Vagina (tissue), 2 donors: ENCODE measurements at regions of chr4 and their contacts with region 1.

Region 1: GRCh38 chr4:8874896-8875680 is 3.4 kb upstream of the HMX1 start:
- DNase-seq: no peak
- H3K4me3 ChIP-seq: no peak overlapping the region
- H3K27ac ChIP-seq: no peak overlapping the region
- H3K4me1 ChIP-seq: peaks cover 7% of the 10 kb centered on the region
- H3K27me3 ChIP-seq: no peaks in the 10 kb centered on the region
- CTCF ChIP-seq: no peak
- POLR2A ChIP-seq: no peak

Region 2: DNA sequence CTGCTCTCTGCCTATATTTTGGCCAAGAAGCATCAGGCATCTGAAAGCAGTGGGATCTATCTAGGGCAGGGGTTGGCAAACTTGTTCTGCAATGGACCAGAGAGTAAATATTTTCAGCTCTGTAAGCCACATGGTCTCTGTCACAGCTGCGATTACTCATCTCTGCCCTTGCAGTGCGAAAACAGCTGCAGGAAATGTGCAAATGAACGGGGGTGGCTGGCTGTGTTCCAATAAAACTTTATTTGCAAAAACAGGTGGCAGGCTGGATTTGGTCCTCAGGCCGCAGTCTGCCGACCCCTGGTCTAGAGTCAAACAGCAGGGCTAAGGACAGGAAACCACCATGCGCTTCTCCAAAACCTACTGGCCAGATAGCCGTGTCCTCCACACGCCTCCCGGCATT is 483.1 kb before region 1 on chr4:
- intact Hi-C with region 1: no loop called
- DNase-seq: no peak
- H3K4me3 ChIP-seq: no peak overlapping the region
- H3K27ac ChIP-seq: peak overlapping the region; percentile 84
- H3K4me1 ChIP-seq: peaks cover 31% of the 10 kb centered on the region
- H3K27me3 ChIP-seq: no peaks in the 10 kb centered on the region
- CTCF ChIP-seq: no peak
- POLR2A ChIP-seq: no peak

Region 3: GRCh38 chr4:8709729-8710360 is 165.2 kb before region 1 on chr4:
- intact Hi-C with region 1: no loop called
- DNase-seq: no peak
- H3K4me3 ChIP-seq: no peak overlapping the region
- H3K27ac ChIP-seq: no peak overlapping the region
- H3K4me1 ChIP-seq: no peaks in the 10 kb centered on the region
- H3K27me3 ChIP-seq: no peaks in the 10 kb centered on the region
- CTCF ChIP-seq: no peak
- POLR2A ChIP-seq: no peak

Region 4: GRCh38 chr4:10722957-10723356 is 1847.9 kb after region 1 on chr4:
- intact Hi-C with region 1: loop called (anchors 5 kb)
- DNase-seq: no peak
- H3K4me3 ChIP-seq: no peak overlapping the region
- H3K27ac ChIP-seq: no peak overlapping the region
- H3K4me1 ChIP-seq: no peaks in the 10 kb centered on the region
- H3K27me3 ChIP-seq: no peaks in the 10 kb centered on the region
- CTCF ChIP-seq: no peak
- POLR2A ChIP-seq: no peak